Heart left ventricle (tissue), 16 donors: ENCODE measurements at regions of chr1 and their contacts with region 1.

Region 1: DNA sequence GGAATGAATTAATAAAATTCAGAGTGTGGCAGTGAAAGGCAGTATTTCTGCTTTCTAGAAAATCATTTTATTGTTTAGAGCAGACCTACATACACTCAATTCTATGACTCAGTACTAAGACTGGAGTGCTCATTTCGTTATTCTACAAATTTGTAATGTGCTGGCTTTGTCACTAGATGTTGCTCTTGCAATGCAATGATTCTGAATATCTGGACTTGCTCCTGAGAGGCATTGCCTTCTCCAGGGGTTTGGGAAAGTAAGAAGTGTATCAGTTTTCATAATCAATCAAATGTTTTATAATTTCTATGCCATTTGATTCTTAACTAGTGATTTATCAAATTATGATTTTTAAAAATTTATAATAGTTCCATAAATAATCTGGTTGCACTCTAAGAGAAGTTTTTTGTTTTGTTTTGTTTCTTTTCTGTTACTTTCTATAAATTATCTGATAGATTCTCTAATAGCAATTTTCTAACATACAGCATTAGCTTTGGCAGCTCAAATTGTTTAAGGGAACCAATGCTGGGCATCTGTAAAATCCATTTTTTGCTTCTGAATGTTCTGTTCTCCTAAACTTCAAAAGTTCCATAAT is 280.5 kb upstream of the SGIP1 start:
- DNase-seq: peak in 1 of 5 donors; percentile 23
- ATAC-seq: peak; percentile 88 to 94 (median 92)
- H3K4me3 ChIP-seq: no peak overlapping the region
- H3K27ac ChIP-seq: no peak overlapping the region
- H3K4me1 ChIP-seq: peaks cover 0 to 25% (median 0%) of the 10 kb centered on the region in 12 donors
- H3K27me3 ChIP-seq: no peaks in the 10 kb centered on the region
- CTCF ChIP-seq: peak; percentile 72 to 93 (median 87)
- POLR2A ChIP-seq: no peak

Region 2: GRCh38 chr1:66446261-66447001 is 193.0 kb after region 1 on chr1:
- intact Hi-C with region 1: loop called (anchors 1 to 5 kb)
- DNase-seq: peak in 2 of 5 donors; percentile 22 to 39
- ATAC-seq: peak in 3 of 4 donors; percentile 41 to 59 (median 57)
- H3K4me3 ChIP-seq: no peak overlapping the region
- H3K27ac ChIP-seq: peak overlapping the region in 5 of 12 donors; percentile 21 to 78 (median 64)
- H3K4me1 ChIP-seq: peaks cover 0 to 40% (median 19%) of the 10 kb centered on the region in 12 donors
- H3K27me3 ChIP-seq: no peaks in the 10 kb centered on the region
- CTCF ChIP-seq: peak; percentile 74 to 94 (median 88)
- POLR2A ChIP-seq: no peak

Region 3: GRCh38 chr1:66732407-66733166 is 479.2 kb after region 1 on chr1:
- intact Hi-C with region 1: loop called in 9 of 10 experiments (anchors 2 to 5 kb)
- DNase-seq: no peak
- ATAC-seq: peak in 1 of 4 donors; percentile 27
- H3K4me3 ChIP-seq: no peak overlapping the region
- H3K27ac ChIP-seq: peak overlapping the region in 1 of 12 donors; percentile 71
- H3K4me1 ChIP-seq: peaks cover 0 to 25% (median 0%) of the 10 kb centered on the region in 12 donors
- H3K27me3 ChIP-seq: no peaks in the 10 kb centered on the region
- CTCF ChIP-seq: no peak
- POLR2A ChIP-seq: no peak

Region 4: GRCh38 chr1:66924756-66925557 is 671.5 kb after region 1 on chr1 and contains the starts of genes DNAI4 and MIER1:
- intact Hi-C with region 1: loop called in 1 of 10 experiments (anchors 10 kb)
- DNase-seq: peak; percentile 98 to 99 (median 99)
- ATAC-seq: peak; percentile 96 to 98 (median 98)
- H3K4me3 ChIP-seq: peak within 1 kb of the TSS; percentile 61 to 93 (median 76)
- H3K27ac ChIP-seq: peak within 1 kb of the TSS; percentile 82 to 96 (median 92)
- H3K4me1 ChIP-seq: peaks cover 3 to 40% (median 27%) of the 10 kb centered on the region in 12 donors
- H3K27me3 ChIP-seq: no peaks in the 10 kb centered on the region
- CTCF ChIP-seq: peak in 7 of 12 donors; percentile 9 to 50 (median 27)
- POLR2A ChIP-seq: peak in 1 of 2 donors; percentile 61
- total RNA-seq, gene DNAI4: 4.5 to 18.9 (median 10.5) TPM
- total RNA-seq, gene MIER1: 14.3 to 23.8 (median 19.3) TPM